Ascending aorta (tissue), 2 donors: ENCODE measurements at regions of chr22 and their contacts with region 1.

Region 1: GRCh38 chr22:32528984-32529982 is 54.7 kb downstream of the FBXO7 start:
- DNase-seq: peak in 1 of 2 donors; percentile 92
- H3K4me3 ChIP-seq: peak overlapping the region in 1 of 2 donors; percentile 43
- H3K27ac ChIP-seq: peak overlapping the region; percentile 22 to 33
- H3K4me1 ChIP-seq: peaks cover 0 to 7% of the 10 kb centered on the region in 2 donors
- H3K27me3 ChIP-seq: no peaks in the 10 kb centered on the region
- CTCF ChIP-seq: peak; percentile 67 to 84 (median 78)

Region 2: GRCh38 chr22:32474635-32475467 is 54.4 kb before region 1 on chr22 and contains the start of gene FBXO7:
- intact Hi-C with region 1: no loop called
- DNase-seq: peak; percentile 61 to 95
- H3K4me3 ChIP-seq: peak within 1 kb of the TSS; percentile 76 to 85
- H3K27ac ChIP-seq: peak within 1 kb of the TSS; percentile 98 to 99
- H3K4me1 ChIP-seq: peaks cover 4 to 18% of the 10 kb centered on the region in 2 donors
- H3K27me3 ChIP-seq: no peaks in the 10 kb centered on the region
- CTCF ChIP-seq: peak; percentile 26 to 52 (median 37)
- total RNA-seq, gene FBXO7: 47.0 TPM

Region 3: GRCh38 chr22:32591620-32592019 is 62.3 kb after region 1 on chr22:
- intact Hi-C with region 1: no loop called
- DNase-seq: no peak
- H3K4me3 ChIP-seq: no peak overlapping the region
- H3K27ac ChIP-seq: no peak overlapping the region
- H3K4me1 ChIP-seq: no peaks in the 10 kb centered on the region
- H3K27me3 ChIP-seq: no peaks in the 10 kb centered on the region
- CTCF ChIP-seq: no peak

Region 4: DNA sequence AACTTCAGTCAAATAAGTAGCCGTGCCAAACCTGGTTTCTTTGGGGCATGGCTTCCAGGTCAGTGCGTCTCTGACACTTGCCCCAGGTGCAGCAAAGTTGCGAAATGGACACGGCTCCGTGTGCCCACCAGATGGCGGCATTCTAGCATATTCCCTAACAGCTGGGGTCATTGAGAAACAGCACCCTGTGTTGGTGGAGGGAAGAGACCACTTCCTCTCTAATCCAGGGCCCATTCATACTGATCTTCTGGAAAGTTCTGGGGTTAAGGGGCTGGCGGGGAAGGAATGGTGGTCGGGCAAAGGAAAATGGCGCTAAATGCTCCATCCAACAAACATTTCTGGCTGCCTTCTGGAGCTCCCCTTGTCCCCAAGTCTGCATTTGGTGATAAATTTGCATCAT is 131.0 kb after region 1 on chr22:
- intact Hi-C with region 1: loop called (anchors 5 kb)
- DNase-seq: peak in 1 of 2 donors; percentile 83
- H3K4me3 ChIP-seq: no peak overlapping the region
- H3K27ac ChIP-seq: no peak overlapping the region
- H3K4me1 ChIP-seq: no peaks in the 10 kb centered on the region
- H3K27me3 ChIP-seq: no peaks in the 10 kb centered on the region
- CTCF ChIP-seq: peak; percentile 67 to 81 (median 71)

Region 5: DNA sequence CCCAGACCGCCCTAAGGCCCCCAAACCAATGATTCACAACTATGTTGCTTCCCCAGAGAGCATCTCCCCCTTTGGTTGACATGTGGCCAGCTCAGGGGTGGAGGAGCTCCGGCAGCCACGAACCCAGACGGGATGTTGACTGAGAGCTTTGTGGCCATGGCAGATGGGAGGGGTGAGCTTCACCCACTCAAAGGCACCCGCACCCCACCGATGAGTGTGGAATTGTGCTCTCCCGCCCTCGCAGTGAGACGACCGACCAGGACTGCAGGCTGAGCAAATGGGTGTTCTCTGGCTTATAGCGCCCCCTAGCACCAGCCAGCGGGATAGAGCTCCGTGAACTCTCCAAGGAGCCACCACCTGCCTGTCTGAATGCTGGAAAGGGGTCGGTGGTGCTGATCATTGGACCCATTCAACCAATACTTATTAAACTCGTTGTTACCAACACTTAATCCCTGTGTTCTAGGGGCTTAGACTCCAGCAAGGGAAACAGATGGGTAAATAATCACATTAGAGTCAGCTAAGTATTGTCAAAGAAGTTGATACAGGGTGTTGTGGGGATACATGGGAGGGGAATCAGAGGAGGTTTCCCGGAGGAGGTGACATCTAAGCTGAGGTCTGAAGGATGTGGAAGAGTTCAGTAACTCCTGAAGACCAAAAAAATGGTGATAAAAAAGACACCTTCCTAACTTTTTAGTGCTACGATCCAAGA is 267.7 kb after region 1 on chr22:
- intact Hi-C with region 1: loop called (anchors 1 kb)
- DNase-seq: peak in 1 of 2 donors; percentile 81
- H3K4me3 ChIP-seq: no peak overlapping the region
- H3K27ac ChIP-seq: no peak overlapping the region
- H3K4me1 ChIP-seq: peaks cover 0 to 3% of the 10 kb centered on the region in 2 donors
- H3K27me3 ChIP-seq: no peaks in the 10 kb centered on the region
- CTCF ChIP-seq: peak; percentile 78 to 89 (median 85)

Region 6: GRCh38 chr22:32985899-32986765 is 456.8 kb after region 1 on chr22:
- intact Hi-C with region 1: loop called (anchors 1 kb)
- DNase-seq: peak in 1 of 2 donors; percentile 85
- H3K4me3 ChIP-seq: no peak overlapping the region
- H3K27ac ChIP-seq: no peak overlapping the region
- H3K4me1 ChIP-seq: no peaks in the 10 kb centered on the region
- H3K27me3 ChIP-seq: no peaks in the 10 kb centered on the region
- CTCF ChIP-seq: peak; percentile 70 to 85 (median 82)

Region 7: GRCh38 chr22:33000342-33001280 is 471.3 kb after region 1 on chr22:
- intact Hi-C with region 1: loop called (anchors 1 kb)
- DNase-seq: peak in 1 of 2 donors; percentile 72
- H3K4me3 ChIP-seq: no peak overlapping the region
- H3K27ac ChIP-seq: no peak overlapping the region
- H3K4me1 ChIP-seq: no peaks in the 10 kb centered on the region
- H3K27me3 ChIP-seq: no peaks in the 10 kb centered on the region
- CTCF ChIP-seq: peak; percentile 77 to 90 (median 84)

Region 8: DNA sequence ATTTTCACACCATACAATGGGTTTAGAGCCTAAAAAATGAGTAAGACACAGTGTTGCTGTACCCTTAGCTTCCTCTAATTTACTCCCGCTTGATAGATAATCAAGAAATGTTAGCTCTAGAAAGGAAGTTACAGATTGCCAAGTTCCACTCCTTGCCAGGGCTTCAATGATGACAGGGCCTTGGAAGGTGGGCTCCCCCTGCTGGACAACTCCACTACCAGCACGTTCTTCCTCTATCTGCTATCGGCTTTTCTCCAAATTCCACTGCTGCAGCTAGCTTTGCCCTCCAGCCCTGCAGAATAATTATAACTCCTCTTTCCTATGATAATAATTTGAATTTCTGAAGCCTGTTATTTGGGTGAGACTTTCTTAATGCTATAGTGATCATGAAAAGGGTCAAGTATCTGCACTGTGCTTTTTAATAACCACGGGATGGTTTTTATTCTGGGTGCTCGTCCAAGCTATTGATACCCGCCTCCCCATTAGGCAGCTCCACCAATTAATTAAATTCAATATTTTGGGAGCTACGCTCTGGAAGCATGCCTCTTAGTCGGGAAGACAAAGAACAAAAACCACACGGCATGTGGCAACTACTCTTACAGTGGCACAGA is 519.9 kb after region 1 on chr22:
- intact Hi-C with region 1: loop called (anchors 2 kb)
- DNase-seq: peak in 1 of 2 donors; percentile 74
- H3K4me3 ChIP-seq: no peak overlapping the region
- H3K27ac ChIP-seq: no peak overlapping the region
- H3K4me1 ChIP-seq: no peaks in the 10 kb centered on the region
- H3K27me3 ChIP-seq: no peaks in the 10 kb centered on the region
- CTCF ChIP-seq: peak; percentile 29 to 81 (median 80)